Calu3 (cell line): ENCODE measurements at regions of chr11 and their contacts with region 1.

Region 1: GRCh38 chr11:63582935-63583677 is 19.9 kb upstream of the PLAAT2 start:
- DNase-seq: no peak
- H3K4me3 Mint-ChIP-seq: no peak overlapping the region
- H3K27ac Mint-ChIP-seq: peak overlapping the region; percentile 86
- H3K4me1 Mint-ChIP-seq: peaks cover 34% of the 10 kb centered on the region
- H3K27me3 Mint-ChIP-seq: no peaks in the 10 kb centered on the region
- CTCF ChIP-seq: no peak

Region 2: GRCh38 chr11:63536669-63537292 is 46.3 kb before region 1 on chr11 and contains the start of gene PLAAT4:
- CTCF ChIA-PET with region 1: no interaction called
- intact Hi-C with region 1: loop called (anchors 5 kb)
- DNase-seq: peak; percentile 29
- H3K4me3 Mint-ChIP-seq: peak within 1 kb of the TSS; percentile 71
- H3K27ac Mint-ChIP-seq: peak within 1 kb of the TSS; percentile 37
- H3K4me1 Mint-ChIP-seq: peaks cover 43% of the 10 kb centered on the region
- H3K27me3 Mint-ChIP-seq: no peaks in the 10 kb centered on the region
- CTCF ChIP-seq: no peak
- total RNA-seq, gene PLAAT4: 157 and 269 TPM in 2 replicates